ENCODE measurements at regions of chr10 and their contacts with region 1.

Region 1: GRCh38 chr10:94443047-94443446 is 40.7 kb downstream of the TBC1D12 start:
- DNase-seq: no peak
- ATAC-seq: peak; percentile 17

Region 2: DNA sequence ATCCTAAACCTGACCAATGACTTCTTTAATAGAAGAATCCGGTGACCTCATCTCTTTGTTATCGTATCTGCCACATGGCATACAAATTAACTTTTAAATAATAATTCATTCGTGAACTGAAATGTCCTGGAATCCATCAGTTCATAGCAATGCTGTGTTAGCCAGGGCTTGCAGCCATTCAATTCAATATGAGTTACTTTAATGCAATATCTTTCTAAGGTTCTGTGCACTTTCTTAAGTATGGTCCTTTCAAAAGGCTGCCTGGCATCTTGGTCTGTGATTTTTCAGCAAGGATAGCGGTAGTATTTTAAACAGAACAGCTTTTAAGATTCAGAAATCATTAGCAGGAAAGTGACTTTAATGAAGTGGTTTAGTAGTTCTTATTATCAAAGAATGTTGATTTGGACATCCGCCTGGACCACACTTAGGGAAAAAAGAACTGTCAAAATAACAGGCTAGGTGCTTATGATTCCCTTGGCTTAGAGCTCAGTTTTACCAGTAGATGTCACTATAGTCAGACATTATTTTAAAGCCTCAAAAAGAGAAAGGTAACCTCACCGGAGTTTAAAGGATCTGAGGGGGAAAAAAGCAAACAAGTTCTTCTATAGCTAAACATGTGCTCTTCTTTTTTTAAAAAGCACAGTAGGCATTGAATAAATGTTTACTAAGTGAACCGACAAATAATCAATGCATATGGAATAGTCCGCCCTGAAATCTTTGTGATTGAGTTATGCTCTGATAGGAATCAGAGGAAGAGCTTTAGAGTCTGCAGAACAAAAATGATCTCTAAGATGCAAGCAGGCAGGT is 526.6 kb before region 1 on chr10:
- intact Hi-C with region 1: loop called in 1 of 2 experiments (anchors 10 kb)
- DNase-seq: no peak
- ATAC-seq: peak; percentile 90

Region 3: DNA sequence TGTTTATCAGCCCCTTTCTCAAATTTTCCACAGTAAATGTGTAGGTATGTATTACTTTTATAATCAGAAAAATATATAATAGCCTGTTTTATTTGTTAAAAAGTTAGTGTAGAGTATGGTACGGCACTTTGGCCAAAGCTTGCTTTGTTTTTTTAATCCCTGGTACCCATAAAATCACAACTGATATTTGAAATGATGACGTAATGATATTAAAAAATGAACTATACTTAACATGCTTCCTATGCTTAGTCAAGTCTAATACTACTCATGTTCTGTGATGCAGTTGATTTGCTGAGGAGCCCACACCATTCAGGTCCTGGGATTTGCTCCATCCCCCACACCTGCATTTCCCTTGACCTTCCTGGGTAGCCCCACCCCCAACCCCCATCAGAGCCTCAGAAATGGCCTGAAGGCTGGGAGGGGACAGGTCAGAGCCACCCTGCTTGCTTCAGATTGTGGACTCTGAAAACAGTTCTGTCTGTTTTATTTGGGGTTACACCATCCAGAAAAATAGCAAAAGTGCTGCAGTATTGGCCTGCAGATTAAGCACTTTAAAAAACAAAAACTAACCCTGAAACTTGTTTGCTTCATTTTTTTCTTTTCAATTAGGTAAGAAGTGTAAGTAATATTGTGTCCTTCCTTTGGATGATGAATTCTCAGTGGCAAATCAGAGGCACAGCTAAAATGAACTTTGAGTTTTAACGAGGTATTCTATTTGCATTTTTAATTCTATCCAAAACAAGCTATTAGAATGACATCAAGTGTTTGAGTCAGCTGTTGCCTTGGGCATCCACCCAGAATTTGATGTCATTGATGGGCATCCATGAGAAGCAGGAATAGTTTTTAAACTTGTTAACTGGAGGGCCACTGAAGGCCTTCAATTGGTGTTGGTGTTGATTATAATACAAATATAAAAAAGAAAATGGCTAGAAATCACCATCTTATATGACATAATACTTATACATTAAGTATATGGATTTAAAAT is 426.0 kb before region 1 on chr10:
- intact Hi-C with region 1: no loop called
- DNase-seq: no peak
- ATAC-seq: no peak

Region 4: DNA sequence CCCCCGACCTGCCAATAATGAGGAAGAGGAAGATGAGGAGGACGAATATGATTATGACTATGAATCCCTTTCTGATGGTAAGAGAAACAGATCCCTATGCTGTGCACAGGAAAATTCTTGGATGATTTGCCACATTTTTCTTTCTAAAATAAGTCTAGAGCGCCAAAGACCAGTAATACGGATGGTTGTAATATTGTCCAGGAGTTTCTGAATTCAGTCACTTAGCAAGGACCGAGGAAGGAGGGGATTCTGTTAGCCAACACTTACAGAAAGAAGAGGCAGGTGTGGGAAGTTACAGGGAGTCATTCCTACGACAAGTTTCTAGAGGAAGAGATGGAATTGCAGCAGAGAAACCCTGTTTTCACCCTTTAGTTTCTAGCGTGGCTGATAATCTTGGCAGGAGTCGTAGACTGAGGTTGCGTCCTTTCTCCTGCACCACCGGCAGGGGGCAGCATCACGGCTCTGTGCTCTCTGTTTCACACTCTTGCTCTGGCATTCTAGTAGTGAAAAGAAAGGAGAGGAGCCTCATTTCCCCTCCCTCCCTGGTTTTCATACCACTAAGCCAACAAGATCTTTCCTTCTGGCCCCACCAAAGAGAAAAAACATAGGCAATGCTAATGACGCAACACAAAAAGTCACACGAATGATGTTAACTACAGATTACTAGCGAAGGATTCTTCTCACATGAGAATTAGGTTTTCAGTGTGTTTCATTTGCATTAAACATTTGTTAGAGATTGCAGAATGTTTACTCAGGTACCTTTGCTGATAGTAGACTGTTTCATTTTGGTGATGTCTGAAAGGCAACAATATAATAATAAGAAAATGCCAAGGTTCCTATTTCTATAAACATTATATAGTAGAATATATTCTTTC is 163.0 kb before region 1 on chr10:
- intact Hi-C with region 1: loop called in 1 of 2 experiments (anchors 10 kb)
- DNase-seq: peak; percentile 22 to 39
- ATAC-seq: peak; percentile 77

Region 5: GRCh38 chr10:94362360-94363250 is 80.4 kb before region 1 on chr10 and contains the start of gene NOC3L:
- intact Hi-C with region 1: loop called in 1 of 2 experiments (anchors 10 kb)
- DNase-seq: peak; percentile 97 to 99
- ATAC-seq: peak; percentile 99
- total RNA-seq, gene NOC3L: 6.3 to 6.6 TPM